Panc1 (cell line): ENCODE measurements at regions of chr9 and their contacts with region 1.

Region 1: GRCh38 chr9:88025399-88026117 is 51.2 kb upstream of the CDK20 start:
- DNase-seq: no peak
- ATAC-seq: no peak
- H3K4me3 ChIP-seq: no peak overlapping the region
- H3K27ac ChIP-seq: no peak overlapping the region
- H3K4me1 ChIP-seq: no peaks in the 10 kb centered on the region
- H3K27me3 ChIP-seq: no peaks in the 10 kb centered on the region
- CTCF ChIP-seq: no peak

Region 2: DNA sequence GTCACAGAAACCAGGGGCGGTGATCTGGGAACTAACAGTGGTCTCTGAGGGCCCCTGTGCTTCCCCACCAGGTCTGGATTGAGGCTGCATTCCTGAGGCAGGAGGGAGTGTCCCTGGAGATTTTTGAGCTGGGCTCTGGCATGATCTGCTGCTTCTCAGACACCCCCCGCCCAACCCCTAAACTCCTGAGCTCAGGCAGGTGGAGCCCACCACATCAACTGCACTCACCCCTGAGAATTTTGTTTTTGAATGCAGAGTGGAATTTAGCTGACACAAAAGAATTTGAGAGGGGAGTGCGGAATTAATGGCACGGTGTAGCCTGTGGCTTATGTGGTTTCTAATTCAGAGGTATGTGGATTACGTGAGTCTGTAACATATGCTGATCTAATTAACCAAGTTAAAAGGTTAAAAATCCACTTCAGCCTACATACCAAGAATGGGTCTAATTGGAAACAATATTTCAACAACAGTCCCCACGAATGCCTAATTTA is 323.6 kb before region 1 on chr9:
- CTCF ChIA-PET with region 1: no interaction called
- POLR2A ChIA-PET with region 1: no interaction called
- in situ Hi-C with region 1: no loop called
- intact Hi-C with region 1: no loop called
- DNase-seq: no peak
- ATAC-seq: no peak
- H3K4me3 ChIP-seq: no peak overlapping the region
- H3K27ac ChIP-seq: no peak overlapping the region
- H3K4me1 ChIP-seq: no peaks in the 10 kb centered on the region
- H3K27me3 ChIP-seq: no peaks in the 10 kb centered on the region
- CTCF ChIP-seq: no peak

Region 3: DNA sequence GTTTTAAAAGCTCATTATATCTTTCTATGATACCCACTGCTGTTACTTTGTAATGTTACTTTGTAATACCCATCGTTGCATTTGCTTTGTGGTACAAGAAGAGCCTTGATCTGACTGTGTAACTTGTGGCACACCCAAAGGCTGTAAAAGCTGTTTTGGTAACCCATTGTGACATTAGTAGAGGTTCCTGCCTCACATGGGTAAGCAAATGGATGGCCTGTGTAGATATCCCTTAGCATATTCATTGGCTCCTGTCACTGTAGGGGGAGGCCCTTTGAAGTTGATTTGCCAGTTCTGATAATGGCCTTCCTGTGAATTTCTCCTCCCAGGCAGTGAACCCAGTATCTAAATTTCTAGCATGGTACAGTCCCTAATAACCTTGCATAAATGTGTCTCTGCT is 67.0 kb before region 1 on chr9:
- CTCF ChIA-PET with region 1: no interaction called
- POLR2A ChIA-PET with region 1: interaction called, 15 read pairs
- in situ Hi-C with region 1: no loop called
- intact Hi-C with region 1: no loop called
- DNase-seq: no peak
- ATAC-seq: no peak
- H3K4me3 ChIP-seq: no peak overlapping the region
- H3K27ac ChIP-seq: no peak overlapping the region
- H3K4me1 ChIP-seq: no peaks in the 10 kb centered on the region
- H3K27me3 ChIP-seq: no peaks in the 10 kb centered on the region
- CTCF ChIP-seq: no peak

Region 4: DNA sequence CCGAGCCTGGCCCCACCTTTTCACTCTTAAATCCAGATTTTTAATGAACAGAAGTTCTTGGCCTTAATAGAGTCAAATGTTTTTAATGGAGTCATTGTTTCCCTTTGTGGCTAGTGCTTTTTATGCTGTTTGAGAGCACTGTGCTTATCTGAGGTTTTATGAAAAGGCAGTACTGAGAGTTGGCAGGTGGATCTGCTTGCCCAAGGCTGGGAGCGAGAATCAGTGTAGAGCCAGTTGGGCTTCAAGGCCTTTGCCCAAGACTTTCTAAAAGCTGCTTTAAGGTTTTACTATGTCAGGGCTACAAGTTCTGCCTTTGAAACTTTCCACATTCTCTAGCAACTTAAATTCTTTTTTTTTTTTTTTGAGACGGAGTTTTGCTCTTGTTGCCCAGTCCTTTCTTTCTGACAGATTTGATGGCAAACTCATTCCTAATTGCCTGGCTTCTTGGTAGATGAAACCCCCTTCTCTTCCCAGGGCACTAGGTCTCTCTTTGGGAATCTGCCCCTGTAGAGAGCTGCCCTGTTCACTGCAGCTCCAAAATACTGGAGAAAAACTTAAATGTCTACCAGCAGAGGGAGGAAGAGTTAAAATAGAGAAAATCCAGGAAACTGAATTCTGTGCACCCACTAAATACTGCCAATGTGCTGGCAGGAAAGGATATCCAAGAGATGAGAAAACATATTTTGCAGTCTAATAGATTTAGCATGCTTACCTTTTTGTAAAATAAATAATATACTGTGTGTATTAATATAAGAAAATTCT is 14.4 kb before region 1 on chr9:
- CTCF ChIA-PET with region 1: interaction called, 10 read pairs
- POLR2A ChIA-PET with region 1: no interaction called
- in situ Hi-C with region 1: no loop called
- intact Hi-C with region 1: no loop called
- DNase-seq: no peak
- ATAC-seq: peak; percentile 74
- H3K4me3 ChIP-seq: no peak overlapping the region
- H3K27ac ChIP-seq: no peak overlapping the region
- H3K4me1 ChIP-seq: no peaks in the 10 kb centered on the region
- H3K27me3 ChIP-seq: no peaks in the 10 kb centered on the region
- CTCF ChIP-seq: peak; percentile 38; the same call in 1 of the 2 replicates